CD8-positive, alpha-beta T cell (primary cell): ENCODE measurements at regions of chr20 and their contacts with region 1.

Region 1: GRCh38 chr20:63223221-63224207 is 7.6 kb upstream of the YTHDF1 start:
- DNase-seq: peak in 7 of 9 experiments; percentile 17 to 67 (median 54)
- ATAC-seq: peak; percentile 73
- H3K4me3 ChIP-seq: no peak overlapping the region
- H3K4me3 Mint-ChIP-seq: no peak overlapping the region
- H3K27ac ChIP-seq: no peak overlapping the region
- H3K27ac Mint-ChIP-seq: no peak overlapping the region
- H3K4me1 ChIP-seq: no peaks in the 10 kb centered on the region
- H3K4me1 Mint-ChIP-seq: no peaks in the 10 kb centered on the region
- H3K27me3 ChIP-seq: peaks cover 0 to 2% of the 10 kb centered on the region in 2 experiments
- H3K27me3 Mint-ChIP-seq: peaks cover 2% of the 10 kb centered on the region
- CTCF ChIP-seq: peak; percentile 85

Region 2: GRCh38 chr20:62274332-62274950 is 949.1 kb before region 1 on chr20:
- CTCF ChIA-PET with region 1: no interaction called
- POLR2A ChIA-PET with region 1: no interaction called
- intact Hi-C with region 1: no loop called
- DNase-seq: no peak
- ATAC-seq: no peak
- H3K4me3 ChIP-seq: no peak overlapping the region
- H3K4me3 Mint-ChIP-seq: no peak overlapping the region
- H3K27ac ChIP-seq: no peak overlapping the region
- H3K27ac Mint-ChIP-seq: no peak overlapping the region
- H3K4me1 ChIP-seq: no peaks in the 10 kb centered on the region
- H3K4me1 Mint-ChIP-seq: no peaks in the 10 kb centered on the region
- H3K27me3 ChIP-seq: no peaks in the 10 kb centered on the region
- H3K27me3 Mint-ChIP-seq: no peaks in the 10 kb centered on the region
- CTCF ChIP-seq: no peak

Region 3: DNA sequence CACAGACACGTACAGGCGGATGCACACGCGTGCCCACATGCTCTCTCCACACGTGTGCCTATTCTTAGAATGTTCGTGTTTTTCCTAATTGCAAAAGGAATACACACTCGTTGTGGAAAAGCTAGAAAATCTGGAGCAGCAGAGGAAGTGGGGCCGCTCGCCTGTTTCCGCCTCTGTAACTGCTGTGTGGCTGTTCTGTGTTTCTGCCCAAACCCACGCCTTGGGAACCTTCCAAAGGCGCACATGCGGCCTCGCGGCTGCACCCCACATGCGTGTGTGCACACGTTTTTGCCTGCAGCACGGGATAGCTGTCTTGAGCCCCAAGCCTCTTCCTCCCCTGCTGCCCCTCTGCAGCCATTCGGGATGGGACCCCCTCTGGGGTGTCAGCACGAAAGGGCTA is 258.8 kb before region 1 on chr20:
- CTCF ChIA-PET with region 1: no interaction called
- POLR2A ChIA-PET with region 1: no interaction called
- intact Hi-C with region 1: no loop called
- DNase-seq: no peak
- ATAC-seq: no peak
- H3K4me3 ChIP-seq: no peak overlapping the region
- H3K4me3 Mint-ChIP-seq: no peak overlapping the region
- H3K27ac ChIP-seq: no peak overlapping the region
- H3K27ac Mint-ChIP-seq: no peak overlapping the region
- H3K4me1 ChIP-seq: peaks cover 3% of the 10 kb centered on the region
- H3K4me1 Mint-ChIP-seq: peaks cover 4% of the 10 kb centered on the region
- H3K27me3 ChIP-seq: no peaks in the 10 kb centered on the region
- H3K27me3 Mint-ChIP-seq: no peaks in the 10 kb centered on the region
- CTCF ChIP-seq: no peak

Region 4: GRCh38 chr20:63082301-63082805 is 141.2 kb before region 1 on chr20:
- CTCF ChIA-PET with region 1: no interaction called
- POLR2A ChIA-PET with region 1: no interaction called
- intact Hi-C with region 1: no loop called
- DNase-seq: peak in 5 of 9 experiments; percentile 27 to 49 (median 40)
- ATAC-seq: peak; percentile 71
- H3K4me3 ChIP-seq: no peak overlapping the region
- H3K4me3 Mint-ChIP-seq: no peak overlapping the region
- H3K27ac ChIP-seq: no peak overlapping the region
- H3K27ac Mint-ChIP-seq: no peak overlapping the region
- H3K4me1 ChIP-seq: no peaks in the 10 kb centered on the region
- H3K4me1 Mint-ChIP-seq: no peaks in the 10 kb centered on the region
- H3K27me3 ChIP-seq: peaks cover 0 to 2% of the 10 kb centered on the region in 2 experiments
- H3K27me3 Mint-ChIP-seq: peaks cover 21% of the 10 kb centered on the region
- CTCF ChIP-seq: no peak

Region 5: GRCh38 chr20:63208346-63208909 is 15.1 kb before region 1 on chr20:
- CTCF ChIA-PET with region 1: interaction called, 19 read pairs
- POLR2A ChIA-PET with region 1: no interaction called
- intact Hi-C with region 1: no loop called
- DNase-seq: no peak
- ATAC-seq: no peak
- H3K4me3 ChIP-seq: no peak overlapping the region
- H3K4me3 Mint-ChIP-seq: no peak overlapping the region
- H3K27ac ChIP-seq: no peak overlapping the region
- H3K27ac Mint-ChIP-seq: peak overlapping the region; percentile 10
- H3K4me1 ChIP-seq: peaks cover 27% of the 10 kb centered on the region
- H3K4me1 Mint-ChIP-seq: peaks cover 57% of the 10 kb centered on the region
- H3K27me3 ChIP-seq: no peaks in the 10 kb centered on the region
- H3K27me3 Mint-ChIP-seq: no peaks in the 10 kb centered on the region
- CTCF ChIP-seq: no peak

Region 6: GRCh38 chr20:63246490-63247288 is 23.2 kb after region 1 on chr20:
- CTCF ChIA-PET with region 1: interaction called, 25 read pairs
- POLR2A ChIA-PET with region 1: no interaction called
- intact Hi-C with region 1: no loop called
- DNase-seq: no peak
- ATAC-seq: no peak
- H3K4me3 ChIP-seq: no peak overlapping the region
- H3K4me3 Mint-ChIP-seq: no peak overlapping the region
- H3K27ac ChIP-seq: no peak overlapping the region
- H3K27ac Mint-ChIP-seq: no peak overlapping the region
- H3K4me1 ChIP-seq: no peaks in the 10 kb centered on the region
- H3K4me1 Mint-ChIP-seq: peaks cover 1% of the 10 kb centered on the region
- H3K27me3 ChIP-seq: peaks cover 0 to 8% of the 10 kb centered on the region in 2 experiments
- H3K27me3 Mint-ChIP-seq: peaks cover 22% of the 10 kb centered on the region
- CTCF ChIP-seq: no peak

Region 7: DNA sequence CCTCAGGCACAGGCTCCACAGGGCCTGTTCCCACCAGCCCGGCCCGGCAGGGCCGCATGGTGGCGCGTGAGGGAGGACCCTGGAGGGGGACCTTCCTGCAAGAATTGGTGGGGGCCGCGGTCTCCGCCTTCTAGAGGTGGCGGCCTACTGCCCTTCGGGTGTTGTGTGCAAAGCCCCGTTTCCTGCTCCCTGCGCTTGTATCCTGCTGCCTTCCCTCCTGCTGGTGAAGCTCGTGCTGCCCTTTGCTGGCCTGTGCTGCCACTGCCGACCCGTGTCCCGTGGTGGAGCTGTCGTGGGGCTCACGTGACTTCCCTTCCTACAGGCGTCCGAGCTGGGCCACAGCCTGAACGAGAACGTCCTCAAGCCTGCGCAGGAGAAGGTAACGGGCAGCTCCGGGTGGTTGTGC is 61.0 kb after region 1 on chr20:
- CTCF ChIA-PET with region 1: interaction called, 13 read pairs
- POLR2A ChIA-PET with region 1: no interaction called
- intact Hi-C with region 1: no loop called
- DNase-seq: no peak
- ATAC-seq: peak; percentile 15
- H3K4me3 ChIP-seq: peak overlapping the region in 1 of 2 experiments; percentile 39
- H3K4me3 Mint-ChIP-seq: peak overlapping the region; percentile 79
- H3K27ac ChIP-seq: peak overlapping the region in 1 of 2 experiments; percentile 27
- H3K27ac Mint-ChIP-seq: no peak overlapping the region
- H3K4me1 ChIP-seq: no peaks in the 10 kb centered on the region
- H3K4me1 Mint-ChIP-seq: peaks cover 2% of the 10 kb centered on the region
- H3K27me3 ChIP-seq: no peaks in the 10 kb centered on the region
- H3K27me3 Mint-ChIP-seq: no peaks in the 10 kb centered on the region
- CTCF ChIP-seq: no peak

Region 8: GRCh38 chr20:63309261-63310071 is 86.0 kb after region 1 on chr20:
- CTCF ChIA-PET with region 1: interaction called, 14 read pairs
- POLR2A ChIA-PET with region 1: no interaction called
- intact Hi-C with region 1: no loop called
- DNase-seq: peak in 4 of 9 experiments; percentile 35 to 52 (median 42)
- ATAC-seq: peak; percentile 36
- H3K4me3 ChIP-seq: no peak overlapping the region
- H3K4me3 Mint-ChIP-seq: no peak overlapping the region
- H3K27ac ChIP-seq: no peak overlapping the region
- H3K27ac Mint-ChIP-seq: no peak overlapping the region
- H3K4me1 ChIP-seq: no peaks in the 10 kb centered on the region
- H3K4me1 Mint-ChIP-seq: no peaks in the 10 kb centered on the region
- H3K27me3 ChIP-seq: no peaks in the 10 kb centered on the region
- H3K27me3 Mint-ChIP-seq: peaks cover 3% of the 10 kb centered on the region
- CTCF ChIP-seq: peak; percentile 75

Region 9: GRCh38 chr20:63351811-63352591 is 128.5 kb after region 1 on chr20:
- CTCF ChIA-PET with region 1: no interaction called
- POLR2A ChIA-PET with region 1: no interaction called
- intact Hi-C with region 1: no loop called
- DNase-seq: no peak
- ATAC-seq: no peak
- H3K4me3 ChIP-seq: no peak overlapping the region
- H3K4me3 Mint-ChIP-seq: no peak overlapping the region
- H3K27ac ChIP-seq: no peak overlapping the region
- H3K27ac Mint-ChIP-seq: no peak overlapping the region
- H3K4me1 ChIP-seq: no peaks in the 10 kb centered on the region
- H3K4me1 Mint-ChIP-seq: no peaks in the 10 kb centered on the region
- H3K27me3 ChIP-seq: no peaks in the 10 kb centered on the region
- H3K27me3 Mint-ChIP-seq: peaks cover 5% of the 10 kb centered on the region
- CTCF ChIP-seq: no peak